Activated CD4-positive, alpha-beta T cell treated with anti-CD3 and anti-CD28 coated beads, Interleukin-2, amount 10 ng/mL, durations not matched to agents 7 days and 5 days (primary cell): ENCODE measurements at regions of chr1 and their contacts with region 1.

Region 1: DNA sequence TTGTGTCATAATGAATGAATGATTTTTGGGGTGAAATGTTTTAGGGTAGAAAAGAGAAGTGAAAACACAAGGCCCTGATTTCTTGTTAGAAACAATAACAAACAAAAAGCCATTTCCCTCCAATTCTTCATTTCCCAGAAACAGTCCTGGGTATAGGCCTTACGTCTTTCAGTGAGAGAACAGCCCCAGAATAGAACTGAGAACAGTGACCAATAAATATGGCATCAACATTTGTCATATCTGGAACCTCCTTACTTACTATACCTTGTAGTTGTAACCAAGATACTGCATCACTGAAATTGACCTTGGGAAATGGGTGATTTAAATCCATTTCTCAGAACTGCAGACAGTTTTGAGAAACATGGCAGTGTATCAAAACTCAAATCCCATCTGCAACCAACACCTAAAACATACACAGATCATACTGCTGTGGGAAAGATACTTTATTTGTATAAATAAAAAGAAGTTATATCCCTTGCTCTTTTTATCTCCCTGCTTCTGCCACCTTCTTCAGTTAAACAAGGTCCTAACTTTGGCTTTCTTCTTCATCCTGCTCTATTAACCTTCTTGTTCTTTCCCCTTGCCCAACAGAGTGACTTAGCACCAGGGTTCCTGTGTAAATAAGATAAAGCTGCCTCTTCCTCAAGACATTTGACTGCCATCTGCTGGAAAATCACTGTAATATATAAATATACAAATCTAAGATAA is 19.5 kb downstream of the XKR8 start:
- DNase-seq: peak; percentile 45
- H3K4me3 Mint-ChIP-seq: no peak overlapping the region
- H3K27ac Mint-ChIP-seq: no peak overlapping the region
- H3K4me1 Mint-ChIP-seq: peaks cover 3% of the 10 kb centered on the region
- H3K27me3 Mint-ChIP-seq: no peaks in the 10 kb centered on the region

Region 2: GRCh38 chr1:27858072-27858958 is 121.0 kb before region 1 on chr1:
- CTCF ChIA-PET with region 1: interaction called, 13 read pairs
- POLR2A ChIA-PET with region 1: no interaction called
- DNase-seq: peak; percentile 86
- H3K4me3 Mint-ChIP-seq: no peak overlapping the region
- H3K27ac Mint-ChIP-seq: peak overlapping the region; percentile 13
- H3K4me1 Mint-ChIP-seq: peaks cover 14% of the 10 kb centered on the region
- H3K27me3 Mint-ChIP-seq: no peaks in the 10 kb centered on the region

Region 3: DNA sequence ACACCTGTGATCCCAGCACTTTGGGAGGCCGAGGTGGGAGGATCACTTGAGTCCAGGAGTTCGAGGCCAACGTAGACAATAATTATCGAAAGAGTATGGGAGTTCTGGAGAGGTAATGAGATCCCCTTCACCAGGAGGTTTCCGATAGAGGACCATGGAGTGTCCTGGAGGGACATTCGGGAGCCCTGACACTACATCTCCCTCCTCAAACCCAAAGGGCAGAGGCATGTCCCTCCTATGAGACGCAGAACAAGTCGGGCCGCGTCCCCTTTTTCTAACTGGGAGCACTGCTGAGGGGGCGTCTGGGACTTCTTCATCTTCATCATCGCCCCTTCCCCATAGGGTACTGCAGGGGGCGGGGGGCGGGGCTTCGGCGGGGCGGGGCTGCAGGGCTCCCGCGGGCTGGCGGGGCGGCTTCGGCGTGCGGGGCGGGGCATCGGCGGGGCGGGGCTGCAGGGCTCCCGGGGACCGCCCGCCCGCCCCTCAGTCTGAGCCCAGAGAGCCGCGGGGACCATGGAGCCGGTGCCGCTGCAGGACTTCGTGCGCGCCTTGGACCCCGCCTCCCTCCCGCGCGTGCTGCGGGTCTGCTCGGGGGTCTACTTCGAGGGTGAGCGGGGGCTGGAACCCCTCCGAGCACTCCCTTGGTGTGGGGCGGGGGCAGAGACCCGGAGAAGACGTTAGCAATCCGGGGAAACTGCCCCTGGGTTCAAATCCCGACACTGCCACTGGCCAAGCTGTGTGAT is 107.1 kb before region 1 on chr1 and contains the start of gene THEMIS2:
- CTCF ChIA-PET with region 1: interaction called, 4 read pairs
- POLR2A ChIA-PET with region 1: interaction called, 10 read pairs
- DNase-seq: peak; percentile 77
- H3K4me3 Mint-ChIP-seq: peak within 1 kb of the TSS; percentile 91
- H3K27ac Mint-ChIP-seq: peak within 1 kb of the TSS; percentile 87
- H3K4me1 Mint-ChIP-seq: peaks cover 42% of the 10 kb centered on the region
- H3K27me3 Mint-ChIP-seq: no peaks in the 10 kb centered on the region
- total RNA-seq, gene THEMIS2: 24.3 to 31.1 TPM

Region 4: DNA sequence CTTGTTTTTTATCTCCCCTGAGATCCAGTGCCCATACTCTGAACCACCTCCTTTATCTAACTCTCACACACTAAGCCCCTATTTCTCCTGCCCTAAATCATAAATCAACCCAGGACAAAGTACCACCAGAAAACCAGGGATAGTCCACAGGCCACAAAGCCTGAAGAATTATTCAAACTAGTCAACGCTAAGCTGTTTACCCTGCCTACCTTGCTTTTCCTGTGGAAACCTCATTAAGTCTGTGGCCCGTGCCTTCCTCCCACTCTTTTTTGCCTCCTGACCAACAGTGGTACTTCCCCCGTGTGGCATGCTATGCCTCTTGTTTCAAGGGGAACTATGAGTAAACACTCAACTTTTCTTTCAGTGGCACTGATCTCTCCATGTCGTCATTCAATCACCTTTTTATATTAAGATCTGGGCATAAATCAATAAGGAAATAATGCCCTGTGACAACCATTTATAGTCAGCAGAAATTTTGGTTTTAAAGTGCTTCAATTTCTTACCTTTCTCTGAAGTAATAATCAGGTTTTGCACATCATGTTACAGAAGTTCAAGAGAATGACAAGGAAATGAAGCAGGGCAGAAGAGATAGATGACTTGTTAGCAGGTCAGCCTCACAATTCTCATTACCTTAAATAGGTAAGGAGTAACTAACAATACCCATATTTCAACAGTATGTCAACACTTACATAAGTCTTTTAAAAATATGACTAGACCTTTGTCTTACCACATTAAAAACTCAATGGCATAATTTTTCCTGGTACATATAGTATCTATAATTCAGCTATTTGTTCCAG is 77.0 kb after region 1 on chr1:
- CTCF ChIA-PET with region 1: no interaction called
- POLR2A ChIA-PET with region 1: no interaction called
- DNase-seq: peak; percentile 57
- H3K4me3 Mint-ChIP-seq: no peak overlapping the region
- H3K27ac Mint-ChIP-seq: peak overlapping the region; percentile 4
- H3K4me1 Mint-ChIP-seq: peaks cover 40% of the 10 kb centered on the region
- H3K27me3 Mint-ChIP-seq: no peaks in the 10 kb centered on the region